ENCODE measurements at regions of chr17 and their contacts with region 1.

Region 1: DNA sequence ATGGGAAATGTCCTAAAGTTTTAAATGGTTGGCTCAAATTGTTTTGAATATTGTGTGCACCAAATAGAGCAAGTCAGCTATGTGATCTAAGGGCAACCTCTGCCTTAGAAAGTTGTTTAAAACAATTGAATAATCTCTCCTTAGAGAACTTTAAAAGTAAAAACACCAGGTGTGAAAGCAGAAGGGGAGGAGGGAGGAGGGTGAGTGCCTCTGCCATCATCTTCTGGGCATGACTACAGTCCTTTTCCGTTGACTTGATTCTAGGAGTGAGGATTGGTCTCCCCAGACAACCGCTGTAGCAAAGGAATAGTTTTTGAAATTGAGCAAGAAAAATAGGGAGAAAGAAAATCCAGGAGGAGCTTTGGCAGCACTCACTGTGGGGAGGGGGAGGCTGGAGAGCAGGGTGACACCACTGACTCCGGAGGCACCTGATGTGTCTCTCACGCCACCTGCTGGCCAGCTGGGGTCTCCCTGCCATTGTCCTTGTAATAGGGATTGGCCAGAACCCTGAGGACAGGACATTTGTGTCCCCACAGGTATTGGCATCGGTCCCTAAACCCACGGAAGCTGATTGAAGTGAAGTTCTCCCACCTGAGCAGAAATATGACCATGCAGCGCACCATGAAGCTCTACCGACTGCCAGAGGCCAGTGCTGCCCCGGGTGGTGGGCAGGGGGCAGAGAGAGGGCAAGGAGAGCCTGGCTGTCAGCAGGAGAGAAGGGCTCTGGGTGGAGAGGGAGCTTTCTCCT is 33.3 kb downstream of the PLCD3 start:
- DNase-seq: peak; percentile 87
- ATAC-seq: peak; percentile 79 to 80

Region 2: DNA sequence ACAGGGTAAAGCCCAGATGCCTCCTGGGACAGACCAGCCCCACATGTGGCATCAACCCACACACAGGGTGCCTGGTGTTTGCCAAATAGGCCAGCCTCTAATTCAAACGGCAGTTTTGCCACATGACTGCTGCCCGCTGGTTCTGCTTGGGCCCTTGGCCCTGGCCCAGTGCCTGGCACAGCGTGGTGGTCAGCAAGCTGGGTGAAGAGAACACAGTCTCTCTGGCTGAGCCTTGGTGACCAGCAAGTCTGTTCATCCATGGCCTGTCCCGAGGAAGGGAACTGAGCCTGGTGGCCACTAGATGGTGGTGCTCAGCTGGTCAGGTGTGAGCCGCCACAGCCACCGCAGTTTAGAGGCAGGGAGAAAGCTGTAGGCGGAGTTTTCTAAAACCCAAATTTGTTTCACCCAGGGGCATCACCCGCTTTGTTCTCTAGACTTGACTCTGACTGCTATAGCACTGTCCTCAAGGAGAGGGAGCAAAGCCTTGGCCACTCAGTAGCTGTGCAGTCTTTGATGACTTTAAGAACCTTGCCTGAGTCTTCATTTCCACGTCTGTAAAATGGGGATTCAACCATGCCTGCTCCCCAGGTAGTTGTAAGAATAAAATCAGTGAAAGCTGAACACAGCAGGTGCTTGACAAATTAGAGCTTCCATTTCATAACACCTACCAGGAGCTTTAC is 179.0 kb before region 1 on chr17:
- intact Hi-C with region 1: loop called (anchors 10 kb)
- DNase-seq: peak; percentile 87
- ATAC-seq: peak; percentile 83

Region 3: DNA sequence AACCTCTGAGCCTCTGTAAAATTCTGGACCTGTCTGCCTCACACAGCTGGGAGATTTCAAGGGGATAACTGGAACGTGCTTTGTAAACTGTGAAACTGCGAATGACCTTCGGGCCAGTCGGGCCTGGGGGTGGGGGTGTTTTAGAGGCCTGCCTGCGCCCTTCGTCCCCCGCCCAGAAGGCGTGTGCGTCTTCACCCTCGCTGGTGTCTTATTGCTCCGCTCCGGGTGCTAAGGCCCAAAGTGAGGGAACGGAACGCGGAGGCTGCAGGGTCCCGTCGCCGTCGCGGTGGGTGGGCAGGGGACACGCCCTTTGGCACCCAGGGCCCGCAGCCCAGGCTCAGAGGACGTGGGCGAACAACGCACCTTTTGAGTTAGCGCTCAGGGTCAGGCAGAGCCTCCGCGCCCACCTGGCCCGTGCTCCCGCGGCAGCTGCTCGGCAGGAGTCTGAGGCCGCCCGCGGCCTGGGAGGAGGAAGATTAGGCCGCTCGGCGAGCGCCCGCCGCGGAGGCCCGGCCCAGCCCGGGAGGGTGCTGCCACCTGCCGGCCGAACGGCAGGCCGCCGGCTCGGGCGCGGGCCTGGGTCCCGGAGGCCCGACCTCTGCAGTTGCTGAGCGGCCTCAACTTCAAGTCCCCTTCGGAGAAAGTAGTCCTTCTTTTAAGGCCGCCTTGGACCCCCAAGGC is 77.3 kb before region 1 on chr17:
- intact Hi-C with region 1: loop called in 1 of 2 experiments (anchors 2 kb)
- DNase-seq: peak; percentile 76
- ATAC-seq: peak; percentile 81

Region 4: DNA sequence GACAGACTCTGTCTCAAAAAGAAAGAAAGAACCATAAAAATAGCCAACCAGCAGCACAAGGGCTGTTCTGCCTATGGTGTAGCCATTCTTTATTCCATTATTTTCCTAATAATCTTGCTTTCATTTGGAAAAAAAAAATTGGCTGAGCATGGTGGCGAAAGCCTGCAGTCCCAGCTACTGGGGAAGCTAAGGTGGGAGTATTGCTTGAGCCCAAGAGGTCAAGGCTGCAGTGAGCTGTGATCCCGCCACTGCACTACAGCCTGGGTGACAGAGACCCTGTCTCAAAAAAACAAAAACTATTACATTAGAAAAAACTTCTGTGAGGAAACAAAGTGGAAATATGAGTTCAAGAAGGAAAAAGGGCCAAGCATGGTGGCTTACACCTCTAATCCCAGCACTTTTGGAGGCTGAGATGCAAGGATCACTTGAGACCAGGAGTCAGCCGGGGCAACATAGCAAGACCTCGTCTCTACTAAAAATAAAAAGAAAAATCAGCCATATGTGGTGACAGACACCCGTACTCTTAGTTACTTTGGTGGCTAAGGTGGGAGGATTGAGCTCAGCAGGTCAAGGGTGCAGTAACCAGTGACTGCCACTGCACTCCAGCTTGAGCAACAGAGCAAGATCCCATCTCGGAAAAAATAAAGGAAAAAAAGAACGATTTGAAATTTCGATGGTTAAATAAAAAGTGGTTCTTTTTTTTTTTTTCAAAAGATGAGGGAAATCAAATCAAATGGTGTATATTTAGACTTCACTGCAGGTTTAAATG is 50.1 kb before region 1 on chr17:
- intact Hi-C with region 1: loop called in 1 of 2 experiments (anchors 5 kb)
- DNase-seq: no peak
- ATAC-seq: no peak

Region 5: GRCh38 chr17:45135192-45135977 is 36.3 kb after region 1 on chr17 and contains the start of gene ACBD4:
- intact Hi-C with region 1: loop called (anchors 5 kb)
- DNase-seq: peak; percentile 97
- ATAC-seq: peak; percentile 79 to 80
- total RNA-seq, gene ACBD4: 8.4 to 8.7 TPM

Region 6: GRCh38 chr17:45218895-45219661 is 120.0 kb after region 1 on chr17:
- intact Hi-C with region 1: no loop called
- DNase-seq: peak; percentile 87
- ATAC-seq: peak; percentile 72 to 75